ENCODE measurements at regions of chr3 and their contacts with region 1.

Region 1: DNA sequence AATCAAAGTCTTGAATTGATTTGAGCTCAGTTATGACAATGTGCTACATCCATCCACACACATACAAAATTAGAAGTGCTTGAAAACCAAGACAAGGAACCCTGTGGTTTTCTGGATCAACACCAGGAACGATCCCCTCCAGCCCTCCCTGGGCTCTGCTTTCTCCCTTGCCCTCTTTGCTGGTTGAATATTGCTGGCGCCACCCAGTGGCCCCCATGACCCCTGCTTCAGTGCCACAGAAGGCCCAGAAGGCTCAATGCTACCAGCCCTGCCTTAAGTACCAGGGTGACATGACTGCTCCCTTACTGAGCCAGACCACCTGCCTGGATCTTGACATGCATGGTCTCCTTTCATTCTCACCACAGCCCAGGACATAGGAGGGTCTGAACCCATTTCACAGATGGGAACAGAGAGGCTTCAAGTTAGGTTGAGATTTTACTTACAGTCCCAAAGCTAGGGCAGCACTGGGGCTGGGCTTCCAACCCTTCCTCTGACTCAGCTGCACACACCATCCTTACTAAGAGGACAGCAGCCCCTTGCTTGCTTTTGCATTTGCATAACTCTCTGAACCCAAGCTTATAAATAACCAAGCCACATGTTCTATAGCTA is 15.0 kb downstream of the IL12A start:
- DNase-seq: peak; percentile 66
- H3K4me3 Mint-ChIP-seq: no peak overlapping the region
- H3K27ac Mint-ChIP-seq: no peak overlapping the region
- H3K4me1 Mint-ChIP-seq: peaks cover 6% of the 10 kb centered on the region
- H3K27me3 Mint-ChIP-seq: no peaks in the 10 kb centered on the region
- CTCF ChIP-seq: peak; percentile 69

Region 2: DNA sequence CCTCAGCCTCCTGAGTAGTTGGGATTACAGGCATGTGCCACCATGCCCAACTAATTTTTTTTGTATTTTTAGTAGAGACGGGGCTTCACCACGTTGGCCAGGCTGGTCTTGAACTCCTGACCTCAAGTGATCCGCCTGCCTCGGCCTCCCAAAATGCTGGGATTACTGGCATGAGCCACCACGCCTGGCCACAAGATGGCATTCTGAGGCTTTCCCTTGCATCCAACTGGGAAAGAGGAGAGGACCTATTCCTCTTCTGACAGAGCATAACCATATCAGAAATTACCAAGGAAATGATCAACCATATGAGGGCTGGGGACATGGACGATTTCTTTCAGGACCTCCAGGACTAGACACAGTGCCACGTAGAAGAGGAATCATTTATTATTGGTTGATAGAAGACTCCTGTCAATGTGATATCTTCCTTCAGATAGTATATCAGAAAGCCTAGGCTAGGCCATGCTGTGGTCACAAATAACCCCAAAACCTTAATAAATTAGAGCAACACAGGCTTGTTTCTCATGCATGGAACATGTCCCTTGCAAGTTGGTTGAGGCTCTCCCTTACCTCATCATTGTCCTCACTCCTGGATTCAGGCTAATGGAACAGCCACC is 387.3 kb before region 1 on chr3:
- CTCF ChIA-PET with region 1: interaction called, 12 read pairs
- POLR2A ChIA-PET with region 1: no interaction called
- intact Hi-C with region 1: loop called (anchors 1 kb)
- DNase-seq: peak; percentile 67
- H3K4me3 Mint-ChIP-seq: no peak overlapping the region
- H3K27ac Mint-ChIP-seq: no peak overlapping the region
- H3K4me1 Mint-ChIP-seq: peaks cover 14% of the 10 kb centered on the region
- H3K27me3 Mint-ChIP-seq: no peaks in the 10 kb centered on the region
- CTCF ChIP-seq: peak; percentile 83

Region 3: GRCh38 chr3:159804726-159805410 is 198.8 kb before region 1 on chr3:
- CTCF ChIA-PET with region 1: interaction called, 39 read pairs
- POLR2A ChIA-PET with region 1: no interaction called
- intact Hi-C with region 1: loop called (anchors 5 kb)
- DNase-seq: peak; percentile 93
- H3K4me3 Mint-ChIP-seq: no peak overlapping the region
- H3K27ac Mint-ChIP-seq: no peak overlapping the region
- H3K4me1 Mint-ChIP-seq: peaks cover 32% of the 10 kb centered on the region
- H3K27me3 Mint-ChIP-seq: no peaks in the 10 kb centered on the region
- CTCF ChIP-seq: peak; percentile 91

Region 4: DNA sequence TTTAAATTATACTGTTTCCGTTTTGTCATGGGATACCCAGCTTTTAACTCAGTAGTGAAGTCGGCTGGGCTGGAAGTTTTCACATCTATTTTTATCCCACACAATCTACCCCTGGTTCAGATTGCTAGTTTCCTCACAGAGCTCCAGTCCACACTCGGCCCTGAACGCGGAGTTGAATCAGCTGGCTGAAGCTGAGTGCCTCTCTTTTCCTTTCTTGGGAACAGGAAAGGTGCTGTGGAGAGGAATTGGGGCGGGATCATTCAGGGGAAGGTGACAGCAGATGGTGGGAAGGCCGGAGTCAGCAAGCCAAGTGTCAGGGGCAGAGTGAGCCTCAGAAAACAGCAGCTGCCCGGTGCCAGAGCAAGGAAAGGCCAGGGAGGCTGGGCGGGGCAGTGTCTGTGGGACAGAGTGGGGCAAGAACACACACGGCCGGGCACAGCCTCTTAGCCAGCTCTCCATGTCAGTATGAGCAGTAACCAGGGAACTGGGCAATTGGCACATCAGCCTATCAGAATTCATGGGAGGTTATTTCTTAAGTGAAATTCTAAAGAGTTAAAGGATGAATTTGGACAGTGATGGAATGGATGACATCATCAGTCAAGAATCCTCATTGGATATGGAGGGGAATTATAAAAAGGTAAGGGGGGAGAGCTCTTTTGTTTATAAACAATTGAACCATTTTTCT is 150.7 kb before region 1 on chr3:
- CTCF ChIA-PET with region 1: interaction called, 44 read pairs
- POLR2A ChIA-PET with region 1: interaction called, 3 read pairs
- intact Hi-C with region 1: no loop called
- DNase-seq: peak; percentile 57
- H3K4me3 Mint-ChIP-seq: peak overlapping the region; percentile 66
- H3K27ac Mint-ChIP-seq: peak overlapping the region; percentile 92
- H3K4me1 Mint-ChIP-seq: peaks cover 38% of the 10 kb centered on the region
- H3K27me3 Mint-ChIP-seq: no peaks in the 10 kb centered on the region
- CTCF ChIP-seq: no peak

Region 5: GRCh38 chr3:159922861-159923312 is 80.7 kb before region 1 on chr3:
- CTCF ChIA-PET with region 1: interaction called, 87 read pairs
- POLR2A ChIA-PET with region 1: interaction called, 3 read pairs
- intact Hi-C with region 1: no loop called
- DNase-seq: no peak
- H3K4me3 Mint-ChIP-seq: no peak overlapping the region
- H3K27ac Mint-ChIP-seq: no peak overlapping the region
- H3K4me1 Mint-ChIP-seq: peaks cover 1% of the 10 kb centered on the region
- H3K27me3 Mint-ChIP-seq: no peaks in the 10 kb centered on the region
- CTCF ChIP-seq: no peak

Region 6: DNA sequence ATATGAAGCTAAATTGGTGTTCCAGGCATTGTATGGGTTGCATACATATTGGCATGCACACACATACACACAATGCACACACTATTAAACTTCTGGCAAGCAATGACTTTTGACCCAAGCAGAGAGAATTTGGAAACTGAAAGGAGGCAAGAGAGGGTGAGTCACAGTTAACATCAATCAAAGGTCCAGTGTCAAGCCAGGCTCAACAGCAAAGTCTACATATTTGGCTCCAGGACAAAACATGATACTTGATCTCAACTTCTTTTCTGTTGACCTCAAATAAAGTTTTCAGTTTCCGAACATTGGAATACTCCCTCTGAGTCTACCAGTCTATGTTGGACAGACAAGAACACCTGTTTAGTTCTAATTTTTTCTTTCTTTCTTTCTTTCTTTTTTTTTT is 13.3 kb after region 1 on chr3:
- CTCF ChIA-PET with region 1: interaction called, 27 read pairs
- POLR2A ChIA-PET with region 1: no interaction called
- intact Hi-C with region 1: no loop called
- DNase-seq: peak; percentile 84
- H3K4me3 Mint-ChIP-seq: no peak overlapping the region
- H3K27ac Mint-ChIP-seq: no peak overlapping the region
- H3K4me1 Mint-ChIP-seq: peaks cover 5% of the 10 kb centered on the region
- H3K27me3 Mint-ChIP-seq: peaks cover 22% of the 10 kb centered on the region
- CTCF ChIP-seq: no peak

Region 7: DNA sequence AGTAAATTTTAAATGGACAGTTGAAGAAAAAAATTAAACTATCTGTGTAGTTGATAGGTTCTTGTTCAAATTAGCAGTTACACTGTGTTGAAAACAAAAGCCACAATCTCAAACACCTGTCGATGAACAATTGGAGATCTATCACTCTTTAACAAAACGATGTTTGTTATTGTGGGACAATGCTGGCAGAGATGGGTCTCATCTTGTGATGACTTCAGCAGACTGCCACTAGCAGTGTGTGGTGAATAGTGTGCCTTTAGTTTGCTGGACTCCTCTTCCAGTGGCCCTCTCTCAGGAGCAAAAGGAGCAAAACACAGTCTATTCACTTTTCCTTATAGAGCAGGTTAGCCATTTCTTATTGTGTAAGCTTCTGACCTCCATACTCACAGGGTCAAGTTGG is 460.7 kb after region 1 on chr3:
- CTCF ChIA-PET with region 1: no interaction called
- POLR2A ChIA-PET with region 1: no interaction called
- intact Hi-C with region 1: no loop called
- DNase-seq: no peak
- H3K4me3 Mint-ChIP-seq: no peak overlapping the region
- H3K27ac Mint-ChIP-seq: no peak overlapping the region
- H3K4me1 Mint-ChIP-seq: no peaks in the 10 kb centered on the region
- H3K27me3 Mint-ChIP-seq: no peaks in the 10 kb centered on the region
- CTCF ChIP-seq: no peak

Measured in MCF 10A (cell line).